Ascending aorta (tissue), 2 donors: ENCODE measurements at regions of chr2 and their contacts with region 1.

Region 1: DNA sequence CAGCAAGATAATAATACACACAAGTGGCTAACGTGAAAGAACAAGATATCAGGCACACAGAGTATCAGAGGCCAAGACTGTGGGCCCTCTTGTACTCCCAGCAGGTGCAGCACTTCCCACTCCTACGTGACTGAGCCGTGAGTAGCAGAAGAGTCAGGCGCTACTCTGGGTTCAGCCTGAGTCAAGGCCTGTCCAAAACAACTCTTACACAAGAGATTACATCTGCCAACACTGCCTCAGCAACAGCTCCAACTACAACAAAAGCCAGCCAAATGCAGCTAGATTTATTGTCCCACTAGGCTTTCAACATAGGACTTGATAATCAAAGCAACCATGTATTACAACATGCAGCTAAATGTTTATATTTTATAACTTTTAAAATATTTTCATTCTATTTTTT is 56.2 kb downstream of the ITSN2 start:
- DNase-seq: peak; percentile 56 to 87
- H3K4me3 ChIP-seq: no peak overlapping the region
- H3K27ac ChIP-seq: peak overlapping the region; percentile 41 to 63
- H3K4me1 ChIP-seq: peaks cover 5 to 11% of the 10 kb centered on the region in 2 donors
- H3K27me3 ChIP-seq: no peaks in the 10 kb centered on the region
- CTCF ChIP-seq: no peak

Region 2: GRCh38 chr2:24214880-24215279 is 89.2 kb before region 1 on chr2:
- intact Hi-C with region 1: no loop called
- DNase-seq: no peak
- H3K4me3 ChIP-seq: no peak overlapping the region
- H3K27ac ChIP-seq: no peak overlapping the region
- H3K4me1 ChIP-seq: no peaks in the 10 kb centered on the region
- H3K27me3 ChIP-seq: no peaks in the 10 kb centered on the region
- CTCF ChIP-seq: no peak

Region 3: GRCh38 chr2:24360050-24360962 is 56.2 kb after region 1 on chr2 and contains the start of gene ITSN2:
- intact Hi-C with region 1: loop called (anchors 5 kb)
- DNase-seq: peak in 1 of 2 donors; percentile 88
- H3K4me3 ChIP-seq: peak within 1 kb of the TSS; percentile 90 to 96
- H3K27ac ChIP-seq: peak within 1 kb of the TSS; percentile 94
- H3K4me1 ChIP-seq: peaks cover 3 to 12% of the 10 kb centered on the region in 2 donors
- H3K27me3 ChIP-seq: no peaks in the 10 kb centered on the region
- CTCF ChIP-seq: no peak
- total RNA-seq, gene ITSN2: 70.0 TPM

Region 4: GRCh38 chr2:24382363-24383073 is 78.4 kb after region 1 on chr2:
- intact Hi-C with region 1: loop called (anchors 5 kb)
- DNase-seq: peak in 1 of 2 donors; percentile 73
- H3K4me3 ChIP-seq: no peak overlapping the region
- H3K27ac ChIP-seq: no peak overlapping the region
- H3K4me1 ChIP-seq: no peaks in the 10 kb centered on the region
- H3K27me3 ChIP-seq: no peaks in the 10 kb centered on the region
- CTCF ChIP-seq: peak; percentile 55 to 91 (median 88)